Activated naive CD4-positive, alpha-beta T cell treated with anti-CD3 and anti-CD28 coated beads for 36 hours (primary cell): ENCODE measurements at regions of chr3 and their contacts with region 1.

Region 1: GRCh38 chr3:69200384-69201068 is 78.1 kb upstream of the LMOD3 start:
- DNase-seq: peak; percentile 79
- H3K4me3 Mint-ChIP-seq: peak overlapping the region; percentile 75
- H3K27ac Mint-ChIP-seq: peak overlapping the region; percentile 96
- H3K4me1 Mint-ChIP-seq: peaks cover 68% of the 10 kb centered on the region
- H3K27me3 Mint-ChIP-seq: no peaks in the 10 kb centered on the region

Region 2: DNA sequence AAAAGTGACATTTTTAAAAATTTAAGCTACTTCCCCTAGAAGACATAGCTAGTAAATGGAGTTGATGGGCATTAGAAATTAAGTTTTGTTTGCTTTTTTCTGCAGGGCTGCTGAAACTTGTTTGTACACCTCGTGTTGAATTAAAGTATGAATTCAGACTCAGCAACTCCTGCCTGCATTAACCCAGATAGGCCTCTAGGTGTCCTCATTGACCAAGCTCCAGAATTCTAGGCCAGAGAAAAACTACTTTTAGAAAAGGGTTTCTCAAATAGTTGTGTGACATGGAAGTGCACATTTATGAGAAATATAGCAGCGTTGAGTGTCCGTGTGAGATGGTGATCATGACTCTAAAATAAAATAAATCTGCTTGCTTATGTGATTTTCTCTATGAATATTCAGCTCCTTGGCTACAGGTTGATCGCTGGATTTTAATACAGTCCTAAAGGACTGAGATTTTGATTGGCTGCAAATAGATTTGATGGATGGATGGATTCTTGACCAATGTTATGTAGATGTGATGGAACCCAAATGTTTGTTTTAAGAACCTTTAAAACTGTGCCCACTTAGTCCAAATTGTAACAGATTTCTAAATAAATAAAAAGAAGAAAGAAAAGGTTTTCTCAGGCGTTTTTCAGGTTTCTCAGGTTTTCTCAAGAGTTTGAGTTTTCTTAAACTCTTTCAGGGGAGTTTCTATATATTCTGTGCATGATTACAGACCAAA is 38.8 kb before region 1 on chr3:
- CTCF ChIA-PET with region 1: interaction called, 15 read pairs
- intact Hi-C with region 1: loop called (anchors 1 kb)
- DNase-seq: peak; percentile 56
- H3K4me3 Mint-ChIP-seq: no peak overlapping the region
- H3K27ac Mint-ChIP-seq: no peak overlapping the region
- H3K4me1 Mint-ChIP-seq: peaks cover 11% of the 10 kb centered on the region
- H3K27me3 Mint-ChIP-seq: peaks cover 1% of the 10 kb centered on the region

Region 3: GRCh38 chr3:69236812-69237707 is 36.5 kb after region 1 on chr3:
- CTCF ChIA-PET with region 1: interaction called, 3 read pairs
- intact Hi-C with region 1: loop called (anchors 1 kb)
- DNase-seq: peak; percentile 17
- H3K4me3 Mint-ChIP-seq: peak overlapping the region; percentile 66
- H3K27ac Mint-ChIP-seq: peak overlapping the region; percentile 50
- H3K4me1 Mint-ChIP-seq: peaks cover 18% of the 10 kb centered on the region
- H3K27me3 Mint-ChIP-seq: no peaks in the 10 kb centered on the region

Region 4: GRCh38 chr3:69288161-69288895 is 87.8 kb after region 1 on chr3:
- CTCF ChIA-PET with region 1: no interaction called
- intact Hi-C with region 1: loop called (anchors 1 kb)
- DNase-seq: peak; percentile 74
- H3K4me3 Mint-ChIP-seq: no peak overlapping the region
- H3K27ac Mint-ChIP-seq: peak overlapping the region; percentile 6
- H3K4me1 Mint-ChIP-seq: peaks cover 20% of the 10 kb centered on the region
- H3K27me3 Mint-ChIP-seq: no peaks in the 10 kb centered on the region

Region 5: DNA sequence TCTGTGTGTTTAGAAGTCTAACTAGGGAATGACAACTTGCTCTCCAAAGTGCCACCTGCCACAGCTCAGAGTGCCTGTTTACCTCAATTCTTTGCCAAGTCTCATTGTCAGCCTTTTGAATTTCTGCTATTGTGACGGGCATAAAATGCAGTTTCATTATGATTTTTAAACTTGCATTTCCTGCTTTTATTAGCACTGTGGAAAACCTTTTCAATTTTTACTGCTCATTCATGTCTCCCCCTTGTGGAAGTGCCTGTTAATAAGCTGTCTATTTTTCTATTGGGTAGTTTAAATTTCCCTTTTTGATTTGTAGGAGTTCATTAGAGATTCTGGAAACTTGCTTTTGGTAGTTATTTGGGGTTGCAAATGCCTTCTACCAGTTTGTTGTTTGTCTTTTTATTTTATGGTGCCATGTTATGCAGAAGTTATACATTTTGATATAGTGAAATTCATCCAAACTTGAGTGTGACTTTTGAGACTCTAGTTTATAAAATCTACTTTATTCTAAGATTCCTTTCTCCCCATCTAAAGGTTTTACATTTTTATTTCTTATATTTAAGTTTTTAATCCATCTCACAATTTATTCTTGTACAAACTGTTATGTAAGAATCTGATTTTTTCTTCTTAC is 239.2 kb after region 1 on chr3:
- CTCF ChIA-PET with region 1: no interaction called
- intact Hi-C with region 1: loop called (anchors 2 kb)
- DNase-seq: peak; percentile 15
- H3K4me3 Mint-ChIP-seq: no peak overlapping the region
- H3K27ac Mint-ChIP-seq: peak overlapping the region; percentile 48
- H3K4me1 Mint-ChIP-seq: peaks cover 58% of the 10 kb centered on the region
- H3K27me3 Mint-ChIP-seq: peaks cover 5% of the 10 kb centered on the region